Adrenal gland (tissue), 19 donors: ENCODE measurements at regions of chr10 and their contacts with region 1.

Region 1: DNA sequence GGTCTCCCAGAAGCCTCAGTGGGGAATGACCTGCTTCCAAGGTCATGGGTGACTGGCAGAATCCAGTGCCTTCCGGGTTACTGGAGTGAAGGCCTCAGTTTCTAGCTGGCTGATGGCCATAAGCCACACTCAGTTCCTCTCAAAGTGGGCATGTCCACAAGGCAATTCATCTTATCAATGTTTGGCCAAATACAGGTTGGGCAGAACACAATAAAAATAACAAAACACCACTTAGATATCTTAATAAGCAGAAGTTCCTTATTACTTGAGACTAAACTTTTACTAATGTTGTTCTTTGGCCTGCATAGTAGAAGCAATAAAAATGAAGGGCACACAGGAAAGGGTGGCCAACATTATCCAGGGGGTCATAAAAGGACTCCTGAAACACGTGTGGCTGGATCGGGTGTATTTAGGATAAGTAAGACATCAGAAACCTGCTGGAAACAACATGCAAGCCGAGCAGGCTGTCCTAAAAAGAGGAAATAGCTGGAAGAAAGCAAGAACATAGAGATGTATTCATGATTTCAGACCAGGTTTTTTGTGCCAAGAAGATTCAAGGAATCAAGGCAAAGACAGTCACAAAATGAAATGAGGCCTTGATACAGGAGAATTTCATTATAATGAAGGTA is 19.6 kb upstream of the AKR1C2 start:
- DNase-seq: no peak
- H3K4me3 ChIP-seq: no peak overlapping the region
- H3K27ac ChIP-seq: no peak overlapping the region
- H3K4me1 ChIP-seq: peaks cover 11 to 14% of the 10 kb centered on the region in 2 donors
- H3K27me3 ChIP-seq: no peaks in the 10 kb centered on the region
- CTCF ChIP-seq: no peak
- POLR2A ChIP-seq: no peak

Region 2: GRCh38 chr10:5094265-5095205 is 71.2 kb after region 1 on chr10 and contains the start of gene AKR1C3:
- intact Hi-C with region 1: loop called (anchors 10 kb)
- DNase-seq: no peak
- H3K4me3 ChIP-seq: peak within 1 kb of the TSS; percentile 34 to 48 (median 37)
- H3K27ac ChIP-seq: peak within 1 kb of the TSS in 3 of 5 donors; percentile 55 to 63 (median 61)
- H3K4me1 ChIP-seq: peaks cover 0 to 14% of the 10 kb centered on the region in 2 donors
- H3K27me3 ChIP-seq: no peaks in the 10 kb centered on the region
- CTCF ChIP-seq: peak; percentile 38 to 93 (median 80)
- POLR2A ChIP-seq: peak in 1 of 2 donors; percentile 31
- total RNA-seq, gene AKR1C3: 0.67 to 74.8 (median 55.5) TPM